ENCODE measurements at regions of chr1 and their contacts with region 1.

Region 1: DNA sequence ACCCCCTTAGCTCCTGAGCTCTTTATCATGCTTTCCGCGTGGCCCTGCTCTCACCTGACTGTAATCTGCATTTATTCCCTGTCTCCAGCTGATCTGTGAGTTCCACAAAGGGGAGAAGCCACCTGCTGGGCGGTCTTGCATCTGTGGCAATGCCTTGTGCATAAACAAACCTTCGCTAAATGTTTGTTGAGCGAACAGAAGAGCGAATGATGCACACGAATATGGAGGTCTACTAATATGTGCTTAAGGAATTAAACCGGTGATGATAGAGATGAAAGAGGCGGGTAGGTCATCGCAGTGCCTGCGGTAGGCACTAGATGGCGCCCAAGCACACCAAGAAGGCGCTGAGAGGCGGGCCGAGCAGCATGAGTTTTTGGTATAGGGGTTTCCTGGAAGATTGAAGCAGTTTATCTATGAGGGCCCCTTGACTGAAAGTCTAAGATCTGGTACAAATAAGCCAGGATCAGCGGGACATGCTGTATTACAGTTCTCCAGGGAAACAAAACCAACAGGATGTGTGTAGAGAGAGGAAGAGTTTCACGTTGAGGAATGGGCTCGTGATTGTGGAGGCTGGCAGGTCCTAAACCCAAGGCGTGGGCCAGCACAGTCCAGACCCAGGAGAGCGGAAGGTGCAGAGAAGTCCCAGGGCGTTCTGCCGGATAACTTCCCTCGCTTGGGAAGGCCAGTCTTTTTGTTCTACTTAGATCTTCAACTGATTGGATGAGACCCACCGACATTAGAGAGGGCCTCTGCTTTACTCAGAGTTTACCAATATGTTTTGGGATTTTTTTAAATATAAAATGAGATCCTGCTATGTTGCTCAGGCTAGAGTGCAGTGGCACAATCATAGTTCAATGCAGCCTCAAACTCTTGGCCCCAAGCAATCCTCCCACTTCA is 34.7 kb downstream of the TOMM20 start:
- DNase-seq: peak; percentile 87
- ATAC-seq: peak; percentile 64
- H3K4me3 Mint-ChIP-seq: peak overlapping the region; percentile 67
- H3K27ac Mint-ChIP-seq: peak overlapping the region; percentile 14; the same call in 1 of the 2 replicates
- H3K4me1 Mint-ChIP-seq: peaks cover 36% of the 10 kb centered on the region
- H3K27me3 Mint-ChIP-seq: no peaks in the 10 kb centered on the region; the same call in 1 of the 2 replicates
- CTCF ChIP-seq: peak; percentile 91

Region 2: GRCh38 chr1:234610348-234611152 is 483.4 kb before region 1 on chr1:
- CTCF ChIA-PET with region 1: interaction called, 13 read pairs
- POLR2A ChIA-PET with region 1: interaction called, 3 read pairs
- DNase-seq: peak; percentile 87
- ATAC-seq: peak; percentile 65
- H3K4me3 Mint-ChIP-seq: peak overlapping the region; percentile 85
- H3K27ac Mint-ChIP-seq: peak overlapping the region; percentile 99
- H3K4me1 Mint-ChIP-seq: peaks cover 56% of the 10 kb centered on the region
- H3K27me3 Mint-ChIP-seq: no peaks in the 10 kb centered on the region
- CTCF ChIP-seq: no peak

Region 3: DNA sequence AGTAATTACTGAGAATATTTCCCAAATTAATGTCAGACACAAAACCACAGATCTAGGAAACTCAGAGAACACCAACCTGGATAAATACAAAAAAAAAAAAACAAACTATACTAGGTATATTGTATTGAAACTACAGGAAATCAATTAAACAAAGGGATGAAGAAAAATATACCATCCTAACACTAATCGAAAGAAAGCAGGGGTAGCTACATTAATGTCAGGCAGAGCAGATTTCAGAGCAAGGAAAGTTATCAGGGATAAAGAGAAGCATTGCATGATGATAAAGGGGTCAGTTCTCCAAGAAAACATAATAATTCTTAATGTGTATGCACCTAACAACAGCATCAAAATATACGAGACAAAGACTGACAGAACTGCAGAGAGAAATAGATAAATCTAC is 55.2 kb before region 1 on chr1:
- CTCF ChIA-PET with region 1: no interaction called
- POLR2A ChIA-PET with region 1: no interaction called
- DNase-seq: no peak
- ATAC-seq: no peak
- H3K4me3 Mint-ChIP-seq: no peak overlapping the region
- H3K27ac Mint-ChIP-seq: no peak overlapping the region
- H3K4me1 Mint-ChIP-seq: no peaks in the 10 kb centered on the region
- H3K27me3 Mint-ChIP-seq: peaks cover 5% of the 10 kb centered on the region; the same call in 1 of the 2 replicates
- CTCF ChIP-seq: no peak

Region 4: GRCh38 chr1:235105051-235106043 is 11.4 kb after region 1 on chr1:
- CTCF ChIA-PET with region 1: interaction called, 31 read pairs
- POLR2A ChIA-PET with region 1: interaction called, 3 read pairs
- DNase-seq: no peak
- ATAC-seq: no peak
- H3K4me3 Mint-ChIP-seq: no peak overlapping the region
- H3K27ac Mint-ChIP-seq: 0 out of 2 replicates have a peak overlapping the region, but pooled peaks have one; percentile 29
- H3K4me1 Mint-ChIP-seq: peaks cover 13% of the 10 kb centered on the region
- H3K27me3 Mint-ChIP-seq: no peaks in the 10 kb centered on the region
- CTCF ChIP-seq: no peak

Region 5: GRCh38 chr1:235128456-235129328 is 34.7 kb after region 1 on chr1 and contains the start of gene TOMM20:
- CTCF ChIA-PET with region 1: no interaction called
- POLR2A ChIA-PET with region 1: no interaction called
- DNase-seq: peak; percentile 94
- ATAC-seq: peak; percentile 93
- H3K4me3 Mint-ChIP-seq: peak within 1 kb of the TSS; percentile 99
- H3K27ac Mint-ChIP-seq: peak within 1 kb of the TSS; percentile 98
- H3K4me1 Mint-ChIP-seq: peaks cover 38% of the 10 kb centered on the region
- H3K27me3 Mint-ChIP-seq: no peaks in the 10 kb centered on the region
- CTCF ChIP-seq: no peak
- total RNA-seq, gene TOMM20: 180 to 184 TPM (median 182 TPM) in 3 replicates

Measured in WTC11 (cell line).